Esophagus squamous epithelium (tissue), 5 donors: ENCODE measurements at regions of chr11 and their contacts with region 1.

Region 1: GRCh38 chr11:66282468-66283386 is 4.8 kb downstream of the CNIH2 start:
- DNase-seq: peak; percentile 95
- H3K4me3 ChIP-seq: no peak overlapping the region
- H3K27ac ChIP-seq: no peak overlapping the region
- H3K4me1 ChIP-seq: peaks cover 10 to 39% (median 13%) of the 10 kb centered on the region in 3 donors
- H3K27me3 ChIP-seq: peaks cover 0 to 6% (median 0%) of the 10 kb centered on the region in 4 donors
- CTCF ChIP-seq: peak; percentile 94 to 99 (median 98)
- POLR2A ChIP-seq: no peak

Region 2: GRCh38 chr11:66136752-66137123 is 146.0 kb before region 1 on chr11:
- intact Hi-C with region 1: no loop called
- DNase-seq: no peak
- H3K4me3 ChIP-seq: no peak overlapping the region
- H3K27ac ChIP-seq: no peak overlapping the region
- H3K4me1 ChIP-seq: peaks cover 0 to 16% (median 0%) of the 10 kb centered on the region in 3 donors
- H3K27me3 ChIP-seq: no peaks in the 10 kb centered on the region
- CTCF ChIP-seq: no peak
- POLR2A ChIP-seq: no peak

Region 3: DNA sequence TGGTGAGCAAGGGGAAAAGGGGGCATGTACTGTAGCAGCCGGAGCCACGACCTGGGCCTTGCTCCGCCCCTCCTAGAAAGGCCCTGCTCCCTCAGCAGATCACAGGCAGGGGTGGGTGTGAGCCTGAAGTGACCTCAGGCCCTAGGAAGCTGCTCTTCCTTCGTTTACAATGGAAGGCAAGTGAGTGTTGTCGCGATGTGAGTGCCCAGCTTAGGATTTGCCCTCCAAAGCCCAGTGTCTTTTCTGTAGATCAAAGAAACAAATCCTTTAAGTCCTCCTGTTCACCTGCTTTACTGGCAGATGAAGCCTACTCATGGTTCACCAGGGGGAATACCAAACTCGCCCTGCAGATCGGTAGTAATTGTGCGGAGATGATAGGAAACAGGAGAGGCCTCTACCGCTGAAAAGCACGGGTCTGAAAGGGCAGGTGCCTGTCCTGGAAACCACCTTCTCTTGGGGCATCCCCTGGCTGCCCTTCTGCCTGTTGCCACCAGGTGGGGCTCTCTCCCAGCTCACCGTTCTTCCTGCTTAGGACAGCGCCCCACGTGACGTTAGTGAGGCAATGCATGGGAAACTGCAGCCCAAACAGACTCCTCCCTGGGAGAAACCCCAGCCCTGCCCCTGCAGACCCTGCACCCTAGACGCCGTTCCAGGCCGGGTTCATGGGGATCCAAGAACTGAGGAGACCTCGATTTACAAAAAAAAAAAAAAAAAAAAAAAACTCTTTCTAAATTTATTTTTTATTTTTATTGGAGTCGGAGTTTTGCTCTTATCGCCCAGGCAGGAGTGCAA is 60.2 kb before region 1 on chr11:
- intact Hi-C with region 1: loop called (anchors 10 kb)
- DNase-seq: peak; percentile 62
- H3K4me3 ChIP-seq: no peak overlapping the region
- H3K27ac ChIP-seq: peak overlapping the region in 1 of 4 donors; percentile 34
- H3K4me1 ChIP-seq: peaks cover 0 to 14% (median 0%) of the 10 kb centered on the region in 3 donors
- H3K27me3 ChIP-seq: no peaks in the 10 kb centered on the region
- CTCF ChIP-seq: peak; percentile 99 to 100 (median 99)
- POLR2A ChIP-seq: no peak

Region 4: DNA sequence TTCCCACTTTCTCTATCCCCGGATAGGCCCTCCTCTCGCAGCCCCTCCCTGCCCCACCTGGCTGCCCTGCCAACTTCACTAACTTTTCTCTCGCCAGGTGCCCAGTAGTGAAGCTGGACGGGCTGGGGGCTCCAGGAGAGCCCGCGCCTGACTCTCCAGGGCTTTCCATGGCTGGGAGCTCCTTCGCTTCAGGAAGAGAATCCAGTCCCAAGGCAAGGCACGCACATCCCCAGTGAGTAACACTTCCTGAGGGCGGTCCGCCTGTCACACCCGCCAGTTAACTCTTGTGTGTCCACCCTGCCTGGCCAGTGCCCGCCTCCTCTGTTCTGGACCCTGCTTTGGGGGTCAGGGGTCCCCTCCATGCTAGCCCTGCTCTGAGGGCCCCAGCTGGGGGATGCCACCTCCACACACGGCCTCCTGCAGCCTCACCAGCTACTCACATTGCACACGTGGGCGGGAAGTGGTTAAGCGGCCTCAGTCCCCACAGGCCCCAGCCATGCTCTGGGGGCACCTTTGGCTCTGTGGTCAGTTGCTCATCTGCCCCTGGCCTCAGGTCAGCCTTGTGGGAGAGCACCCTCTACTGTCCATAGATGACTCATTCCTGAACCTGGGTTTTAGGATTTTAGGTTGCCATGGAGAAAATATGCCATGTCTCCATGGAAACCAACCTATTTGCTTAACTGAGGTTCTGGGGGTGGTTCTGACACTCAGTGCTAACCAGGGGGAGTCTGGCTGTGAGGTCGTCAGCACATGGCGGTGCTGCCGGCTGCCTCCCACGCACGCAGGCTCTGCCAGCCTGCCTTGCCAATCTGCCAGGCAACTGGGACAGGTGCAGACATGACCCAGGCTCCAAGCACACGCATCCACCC is 53.7 kb after region 1 on chr11 and contains the start of gene RIN1:
- intact Hi-C with region 1: no loop called
- DNase-seq: no peak
- H3K4me3 ChIP-seq: peak within 1 kb of the TSS; percentile 58 to 75 (median 64)
- H3K27ac ChIP-seq: peak within 1 kb of the TSS; percentile 86 to 94 (median 88)
- H3K4me1 ChIP-seq: peaks cover 45 to 71% (median 52%) of the 10 kb centered on the region in 3 donors
- H3K27me3 ChIP-seq: no peaks in the 10 kb centered on the region
- CTCF ChIP-seq: peak in 3 of 6 experiments; percentile 8 to 31 (median 17)
- POLR2A ChIP-seq: peak in 1 of 4 donors; percentile 50
- total RNA-seq, gene RIN1: 22.3 to 37.2 (median 27.6) TPM